Right ventricle myocardium inferior (tissue), 1 donor: ENCODE measurements at regions of chr3 and their contacts with region 1.

Region 1: DNA sequence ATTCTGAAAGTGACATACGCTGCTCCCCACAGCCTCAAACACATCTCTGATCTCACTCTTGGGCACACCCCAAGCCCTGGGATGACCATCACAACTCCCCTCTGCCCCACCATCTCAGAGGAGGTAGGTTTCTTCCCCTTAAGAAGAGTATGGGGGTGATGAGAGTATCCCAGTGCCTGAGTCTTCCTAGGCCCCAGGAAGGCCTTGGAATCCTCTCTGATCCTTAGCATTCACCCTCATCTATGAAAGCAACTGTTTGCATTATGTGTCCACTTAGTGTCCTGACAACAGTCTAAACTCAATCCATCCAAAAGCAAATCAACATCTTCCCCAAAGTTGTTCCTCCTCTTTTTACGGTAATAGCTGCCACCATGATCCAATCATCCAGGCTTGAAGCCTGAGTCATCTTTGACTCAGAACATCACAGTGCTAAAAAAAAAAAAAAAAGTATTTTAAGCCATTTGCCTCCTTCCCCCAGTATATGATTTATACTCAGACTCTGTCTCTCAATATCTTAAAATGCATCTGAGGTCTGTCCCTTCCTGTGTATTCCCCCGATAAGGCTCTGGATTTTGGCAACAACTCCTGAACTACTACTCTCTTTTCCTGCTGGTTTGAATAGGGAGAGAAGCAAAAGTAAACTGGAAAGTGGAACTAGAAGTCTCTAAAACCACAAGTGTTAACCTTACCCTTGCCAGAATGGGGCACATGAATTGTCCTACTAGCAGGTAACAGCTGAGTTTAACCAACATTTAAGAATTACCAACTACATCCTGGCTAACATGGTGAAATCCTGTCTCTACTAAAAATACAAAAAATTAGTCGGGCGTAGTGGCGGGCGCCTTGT is 22.5 kb downstream of the POPDC2 start:
- DNase-seq: no peak
- ATAC-seq: peak; percentile 11

Region 2: DNA sequence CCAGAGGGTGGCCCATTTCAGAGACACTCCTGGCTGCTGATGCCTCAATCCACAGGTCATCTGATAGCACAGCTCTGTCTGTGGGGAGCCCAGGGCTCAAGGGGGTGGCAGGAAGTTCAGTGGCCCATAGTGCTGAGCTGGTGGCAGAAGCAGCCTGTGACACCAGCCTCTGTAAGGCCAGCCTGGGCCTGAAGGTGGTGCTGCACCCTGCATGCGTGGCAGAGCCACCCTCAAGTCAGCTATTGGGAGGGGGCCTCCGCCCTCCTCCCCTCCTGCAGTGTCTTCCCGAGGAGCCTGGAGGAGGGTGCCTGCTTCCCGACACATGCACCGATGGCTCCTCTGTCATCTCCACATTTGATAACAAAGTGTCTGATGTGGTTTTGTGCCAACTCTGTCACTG is 37.2 kb before region 1 on chr3:
- intact Hi-C with region 1: loop called (anchors 2 kb)
- DNase-seq: no peak
- ATAC-seq: peak; percentile 62